ENCODE measurements at regions of chr1 and their contacts with region 1.

Region 1: GRCh38 chr1:113452921-113453770 is 62.8 kb downstream of the MAGI3 start:
- DNase-seq: peak in 1 of 10 donors; percentile 8

Region 2: GRCh38 chr1:113140588-113141446 is 312.3 kb before region 1 on chr1:
- intact Hi-C with region 1: loop called (anchors 10 kb)
- DNase-seq: peak; percentile 13 to 91 (median 62)

Measured in posterior cingulate gyrus (tissue), 11 donors.